Activated T-helper 1 cell treated with anti-CD3 and anti-CD28 coated beads, Interleukin-12 subunit alpha, Interleukin-12 subunit beta, Interleukin-2, Interleukin-4 antibody, amounts not matched to agents 30 ng/mL and 10 ng/mL and 1 ng/mL, durations not matched to agents 14 hours and 24 hours and 36 hours (primary cell): ENCODE measurements at regions of chr12 and their contacts with region 1.

Region 1: DNA sequence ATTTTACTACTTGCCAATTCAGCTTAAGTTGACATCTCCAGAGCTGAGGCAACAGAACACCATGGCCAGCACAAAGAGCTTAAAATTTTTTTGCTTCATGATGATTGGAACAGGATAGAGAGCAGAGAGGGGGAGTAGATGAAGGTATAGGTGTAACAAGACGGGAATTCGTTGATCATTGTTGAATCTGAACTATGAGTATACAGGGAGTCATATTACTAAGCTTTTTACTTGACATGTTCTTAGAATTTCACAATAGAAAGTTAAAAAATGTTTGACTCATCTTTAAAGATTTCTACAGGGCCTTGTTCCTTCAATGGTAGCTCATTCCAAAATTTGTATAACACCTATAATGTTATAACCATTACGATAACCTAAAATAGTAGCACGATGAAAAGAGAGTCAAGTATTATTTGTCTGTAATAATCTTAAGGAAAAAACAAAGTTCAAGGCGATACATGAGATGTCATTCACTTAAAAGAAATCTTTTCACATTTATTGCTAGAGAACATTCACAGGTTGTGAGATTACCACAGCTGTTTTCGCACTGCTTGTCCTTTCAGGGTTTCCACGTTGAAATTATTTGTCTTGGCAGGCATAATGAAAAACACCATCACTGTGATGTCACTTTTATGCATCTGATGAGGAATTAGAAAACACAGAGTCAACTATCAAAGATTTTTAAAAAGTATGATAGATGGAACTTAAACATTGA is 33.9 kb downstream of the SPX start:
- DNase-seq: no peak
- H3K4me3 Mint-ChIP-seq: no peak overlapping the region
- H3K27ac Mint-ChIP-seq: peak overlapping the region; percentile 68
- H3K4me1 Mint-ChIP-seq: peaks cover 14% of the 10 kb centered on the region
- H3K27me3 Mint-ChIP-seq: no peaks in the 10 kb centered on the region

Region 2: DNA sequence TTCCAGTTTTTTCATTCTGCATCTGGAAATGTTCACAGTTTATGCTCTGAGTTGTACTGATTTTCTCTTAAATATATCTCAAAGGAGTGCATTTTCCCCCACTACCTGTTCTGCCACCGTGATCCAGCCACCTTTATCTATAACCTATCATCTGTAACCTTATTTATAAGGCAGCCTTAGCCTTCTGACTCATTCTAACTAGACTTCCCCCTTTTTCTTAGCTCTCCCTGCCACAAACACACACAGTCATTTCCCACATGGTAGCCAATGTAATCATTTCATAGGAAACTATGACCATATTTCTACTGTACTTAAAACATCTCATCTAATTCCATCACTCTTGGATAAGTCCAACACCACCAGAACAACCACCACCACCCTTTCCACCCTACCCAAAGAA is 55.4 kb after region 1 on chr12:
- intact Hi-C with region 1: loop called (anchors 5 kb)
- DNase-seq: no peak
- H3K4me3 Mint-ChIP-seq: peak overlapping the region; percentile 46
- H3K27ac Mint-ChIP-seq: peak overlapping the region; percentile 45
- H3K4me1 Mint-ChIP-seq: peaks cover 46% of the 10 kb centered on the region
- H3K27me3 Mint-ChIP-seq: peaks cover 2% of the 10 kb centered on the region